Testis (tissue), 5 donors: ENCODE measurements at regions of chr10 and their contacts with region 1.

Region 1: DNA sequence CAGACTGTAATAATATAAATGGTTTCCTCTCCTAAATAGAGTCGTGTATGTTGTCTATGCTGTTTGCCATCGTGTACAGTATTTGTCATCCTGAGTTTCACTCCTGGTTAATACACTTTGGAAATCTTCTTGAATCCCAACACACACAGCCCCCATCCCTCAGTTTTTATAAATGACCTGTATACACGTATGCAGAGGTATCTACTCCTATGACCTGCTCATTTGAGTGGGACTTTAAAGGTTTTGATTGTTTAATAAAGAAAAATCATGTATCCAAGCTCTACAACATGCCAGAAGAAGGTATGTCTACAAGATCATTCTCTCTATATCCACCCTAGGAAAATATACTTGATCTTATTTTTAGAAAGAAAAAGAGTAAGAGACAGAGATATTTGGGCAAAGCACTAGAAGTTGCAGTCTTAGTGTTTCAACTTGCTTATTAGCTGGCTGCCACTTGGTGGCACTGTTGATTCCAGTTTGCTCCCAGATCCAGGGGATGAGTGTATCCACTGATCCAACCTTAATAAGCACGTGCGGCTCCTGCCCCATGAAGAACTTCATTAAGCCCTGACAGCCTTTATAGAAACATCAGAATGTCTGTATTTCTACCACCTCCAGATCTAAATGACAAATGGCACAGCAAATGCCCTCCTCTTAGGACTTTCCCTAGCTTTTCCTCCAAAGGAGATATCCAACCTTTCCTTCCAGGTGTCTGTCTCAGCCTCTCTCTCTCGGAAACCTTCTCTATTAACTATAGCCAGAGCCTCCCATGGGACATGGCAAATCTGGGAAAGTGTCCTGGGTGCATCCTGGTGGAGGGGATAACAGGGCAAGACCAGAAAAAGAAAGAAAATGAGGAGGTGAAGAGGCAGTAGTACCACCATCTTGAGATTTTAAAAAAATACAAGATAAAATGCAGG is 181.6 kb upstream of the NEBL start:
- DNase-seq: peak; percentile 79
- H3K4me3 ChIP-seq: no peak overlapping the region
- H3K27ac ChIP-seq: no peak overlapping the region
- H3K4me1 ChIP-seq: peaks cover under 1% of the 10 kb centered on the region
- H3K27me3 ChIP-seq: no peaks in the 10 kb centered on the region
- CTCF ChIP-seq: peak; percentile 50 to 68 (median 61)
- POLR2A ChIP-seq: no peak

Region 2: GRCh38 chr10:21278491-21279239 is 200.0 kb after region 1 on chr10:
- intact Hi-C with region 1: loop called (anchors 10 kb)
- DNase-seq: peak; percentile 99
- H3K4me3 ChIP-seq: no peak overlapping the region
- H3K27ac ChIP-seq: no peak overlapping the region
- H3K4me1 ChIP-seq: no peaks in the 10 kb centered on the region
- H3K27me3 ChIP-seq: no peaks in the 10 kb centered on the region
- CTCF ChIP-seq: peak; percentile 89 to 93 (median 89)
- POLR2A ChIP-seq: no peak